ENCODE measurements at regions of chr1 and their contacts with region 1.

Region 1: DNA sequence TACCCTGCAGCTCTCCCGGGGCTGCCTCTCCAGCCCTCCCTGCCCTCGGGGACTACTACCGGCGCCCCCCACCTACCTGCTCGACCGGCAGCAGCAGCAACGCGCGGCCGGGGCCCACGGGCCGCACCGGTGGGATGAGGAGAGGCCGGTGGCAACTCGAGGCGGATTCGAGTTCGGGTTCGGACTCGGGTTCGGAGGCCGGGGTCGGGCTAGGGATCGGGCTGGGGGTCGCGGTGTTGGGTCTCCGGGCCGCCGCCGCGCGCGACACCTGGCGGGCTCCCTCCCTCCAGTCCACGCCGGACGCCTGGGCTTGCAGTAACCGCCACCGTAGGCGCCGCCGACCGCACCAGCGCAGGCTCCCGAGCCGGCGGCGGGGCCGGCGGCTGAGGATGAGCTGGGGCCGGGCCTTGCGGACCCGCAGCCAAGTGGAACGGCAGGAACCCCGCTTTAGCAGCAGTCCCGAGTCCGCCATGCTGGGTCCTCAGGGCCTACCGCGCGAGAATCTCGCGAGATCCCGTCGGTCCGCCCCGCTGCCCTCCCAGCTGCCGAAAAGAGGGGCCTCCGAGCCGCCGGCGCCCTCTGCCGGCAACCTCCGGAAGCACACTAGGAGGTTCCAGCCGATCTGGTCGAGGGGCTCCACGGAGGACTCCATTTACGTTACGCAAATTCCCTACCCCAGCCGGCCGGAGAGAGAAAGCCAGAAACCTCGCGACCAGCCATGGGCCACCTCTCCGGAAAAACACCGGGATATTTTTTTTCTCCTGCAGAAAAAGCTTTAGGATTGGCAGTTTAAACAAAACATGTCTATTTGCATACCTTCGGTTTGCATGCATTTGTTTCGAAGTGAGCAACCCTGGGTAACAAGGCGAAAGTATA is at the start of gene NOL9:
- DNase-seq: peak; percentile 98
- H3K4me3 ChIP-seq: peak within 1 kb of the TSS; percentile 82 to 85 (median 82)
- H3K27ac ChIP-seq: peak within 1 kb of the TSS; percentile 82 to 86 (median 84)
- H3K4me1 ChIP-seq: peaks cover 15 to 28% (median 25%) of the 10 kb centered on the region in 4 donors
- H3K27me3 ChIP-seq: no peaks in the 10 kb centered on the region
- CTCF ChIP-seq: peak; percentile 97 to 99 (median 97)
- EP300 ChIP-seq: no peak
- POLR2A ChIP-seq: no peak
- total RNA-seq, gene NOL9: 16.6 to 25.0 (median 21.1) TPM

Region 2: GRCh38 chr1:6489799-6490180 is 64.5 kb before region 1 on chr1:
- intact Hi-C with region 1: loop called (anchors 5 kb)
- DNase-seq: no peak
- H3K4me3 ChIP-seq: peak overlapping the region; percentile 68 to 79 (median 69)
- H3K27ac ChIP-seq: peak overlapping the region in 1 of 4 donors; percentile 79
- H3K4me1 ChIP-seq: peaks cover 56 to 60% (median 58%) of the 10 kb centered on the region in 4 donors
- H3K27me3 ChIP-seq: peaks cover 8 to 45% (median 15%) of the 10 kb centered on the region in 4 donors
- CTCF ChIP-seq: peak in 2 of 3 experiments; percentile 74 to 80
- EP300 ChIP-seq: no peak
- POLR2A ChIP-seq: no peak

Region 3: GRCh38 chr1:6579374-6580118 is 25.3 kb after region 1 on chr1 and contains the start of gene ZBTB48:
- intact Hi-C with region 1: loop called (anchors 2 kb)
- DNase-seq: peak; percentile 100
- H3K4me3 ChIP-seq: peak within 1 kb of the TSS; percentile 85 to 98 (median 96)
- H3K27ac ChIP-seq: peak within 1 kb of the TSS; percentile 95 to 98 (median 97)
- H3K4me1 ChIP-seq: peaks cover 32 to 44% (median 41%) of the 10 kb centered on the region in 4 donors
- H3K27me3 ChIP-seq: no peaks in the 10 kb centered on the region
- CTCF ChIP-seq: no peak
- EP300 ChIP-seq: no peak
- POLR2A ChIP-seq: peak; percentile 96
- total RNA-seq, gene ZBTB48: 15.0 to 24.9 (median 16.4) TPM

Region 4: GRCh38 chr1:6646499-6647148 is 92.4 kb after region 1 on chr1:
- intact Hi-C with region 1: loop called (anchors 5 kb)
- DNase-seq: no peak
- H3K4me3 ChIP-seq: no peak overlapping the region
- H3K27ac ChIP-seq: no peak overlapping the region
- H3K4me1 ChIP-seq: no peaks in the 10 kb centered on the region
- H3K27me3 ChIP-seq: no peaks in the 10 kb centered on the region
- CTCF ChIP-seq: peak; percentile 52 to 64 (median 63)
- EP300 ChIP-seq: no peak
- POLR2A ChIP-seq: no peak